ENCODE measurements at regions of chr1 and their contacts with region 1.

Region 1: GRCh38 chr1:24744911-24745710 is at the start of gene CLIC4:
- DNase-seq: peak; percentile 94
- ATAC-seq: peak; percentile 78
- H3K4me3 ChIP-seq: peak within 1 kb of the TSS; percentile 77
- H3K27ac ChIP-seq: peak within 1 kb of the TSS; percentile 76
- H3K4me1 ChIP-seq: peaks cover 34% of the 10 kb centered on the region
- H3K27me3 ChIP-seq: no peaks in the 10 kb centered on the region
- CTCF ChIP-seq: peak in 2 of 3 experiments; percentile 18 to 72; a peak in 3 of 6 replicates
- EP300 ChIP-seq: peak; percentile 34 to 64; a peak in 2 of 4 replicates
- POLR2A ChIP-seq: peak; percentile 91
- RAD21 ChIP-seq: no peak; the same call in 1 of the 2 replicates
- polyA plus RNA-seq, gene CLIC4: 20.4 to 26.5 TPM

Region 2: DNA sequence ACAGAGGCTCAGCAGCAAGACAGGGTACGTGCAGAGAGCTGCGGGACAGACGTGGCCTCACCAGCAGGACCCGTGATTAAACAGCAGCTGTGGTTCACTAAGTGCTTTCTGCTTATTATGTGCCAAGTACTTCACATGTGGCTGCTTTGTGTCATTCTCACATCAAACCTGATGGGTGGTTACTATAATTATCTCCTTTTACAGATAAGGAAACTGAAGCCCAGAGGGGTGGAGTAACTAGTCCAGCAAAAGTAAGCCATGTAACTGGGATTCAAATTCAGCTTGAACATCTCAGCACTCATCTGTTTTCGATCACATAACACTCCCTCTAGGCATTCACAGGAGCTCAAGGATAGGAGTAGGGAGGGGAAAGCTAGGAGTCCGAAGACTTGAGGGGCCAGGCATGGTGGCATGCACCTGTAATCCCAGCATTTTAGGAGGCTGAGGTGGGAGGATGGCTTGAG is 50.7 kb before region 1 on chr1:
- CTCF ChIA-PET with region 1: interaction called, 122 read pairs
- POLR2A ChIA-PET with region 1: interaction called, 29 read pairs
- RAD21 ChIA-PET with region 1: interaction called, 109 read pairs
- SMC1A ChIA-PET with region 1: interaction called, 93 read pairs
- in situ Hi-C with region 1: no loop called
- intact Hi-C with region 1: loop called (anchors 1 kb)
- DNase-seq: peak; percentile 79
- ATAC-seq: peak; percentile 94
- H3K4me3 ChIP-seq: no peak overlapping the region
- H3K27ac ChIP-seq: peak overlapping the region; percentile 43; the same call in 1 of the 2 replicates
- H3K4me1 ChIP-seq: peaks cover 27% of the 10 kb centered on the region
- H3K27me3 ChIP-seq: no peaks in the 10 kb centered on the region
- CTCF ChIP-seq: no peak
- EP300 ChIP-seq: peak; percentile 35 to 71; a peak in 3 of 4 replicates
- POLR2A ChIP-seq: peak; percentile 58
- RAD21 ChIP-seq: no peak

Region 3: GRCh38 chr1:24727501-24728216 is 17.5 kb before region 1 on chr1:
- CTCF ChIA-PET with region 1: interaction called, 19 read pairs
- POLR2A ChIA-PET with region 1: interaction called, 72 read pairs
- RAD21 ChIA-PET with region 1: interaction called, 77 read pairs
- SMC1A ChIA-PET with region 1: interaction called, 49 read pairs
- in situ Hi-C with region 1: no loop called
- intact Hi-C with region 1: no loop called
- DNase-seq: peak; percentile 71
- ATAC-seq: peak; percentile 98
- H3K4me3 ChIP-seq: peak overlapping the region; percentile 23; the same call in 1 of the 2 replicates
- H3K27ac ChIP-seq: peak overlapping the region; percentile 52
- H3K4me1 ChIP-seq: peaks cover 23% of the 10 kb centered on the region
- H3K27me3 ChIP-seq: no peaks in the 10 kb centered on the region
- CTCF ChIP-seq: no peak
- EP300 ChIP-seq: no peak
- POLR2A ChIP-seq: no peak
- RAD21 ChIP-seq: no peak

Region 4: GRCh38 chr1:24769656-24770651 is 24.8 kb after region 1 on chr1:
- CTCF ChIA-PET with region 1: interaction called, 30 read pairs
- POLR2A ChIA-PET with region 1: interaction called, 13 read pairs
- RAD21 ChIA-PET with region 1: interaction called, 56 read pairs
- SMC1A ChIA-PET with region 1: interaction called, 174 read pairs
- in situ Hi-C with region 1: no loop called
- intact Hi-C with region 1: no loop called
- DNase-seq: no peak
- ATAC-seq: peak; percentile 78
- H3K4me3 ChIP-seq: no peak overlapping the region
- H3K27ac ChIP-seq: peak overlapping the region; percentile 54
- H3K4me1 ChIP-seq: peaks cover 7% of the 10 kb centered on the region; the same call in 1 of the 2 replicates
- H3K27me3 ChIP-seq: no peaks in the 10 kb centered on the region
- CTCF ChIP-seq: no peak
- EP300 ChIP-seq: peak; percentile 49 to 57; a peak in 3 of 4 replicates
- POLR2A ChIP-seq: no peak
- RAD21 ChIP-seq: no peak

Region 5: DNA sequence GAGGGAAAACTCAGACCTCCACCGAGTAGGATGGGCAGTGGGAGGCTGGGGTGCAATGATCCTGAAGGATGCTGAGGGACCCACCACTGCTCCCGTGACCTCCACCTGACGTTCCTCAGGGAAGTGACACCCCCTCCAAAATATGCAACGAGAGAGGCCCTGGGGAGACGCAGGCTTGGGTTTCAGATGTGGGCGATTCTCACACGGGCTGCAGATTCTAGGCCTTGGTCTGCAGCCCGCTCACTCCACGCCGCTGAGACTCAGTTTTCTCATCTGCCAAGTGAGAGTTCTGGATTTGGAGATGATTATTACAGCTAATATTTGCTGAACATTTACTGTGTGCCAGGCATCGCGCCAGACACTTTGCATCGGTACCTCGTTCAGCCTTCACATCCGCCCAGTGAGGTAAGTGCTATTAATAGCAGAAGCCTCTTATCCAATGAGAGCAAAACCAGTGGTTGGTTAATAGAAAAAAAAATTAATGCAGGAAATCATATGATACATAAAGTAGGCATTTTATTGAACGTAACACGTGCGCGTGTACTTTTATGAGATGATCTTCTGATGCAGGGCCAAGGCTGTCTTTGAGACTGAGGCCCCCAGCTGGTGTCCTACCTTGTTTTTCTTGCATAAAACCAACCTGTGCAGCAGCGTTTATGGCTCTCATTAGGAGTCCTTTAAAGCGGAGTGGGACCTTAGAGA is 287.0 kb after region 1 on chr1:
- CTCF ChIA-PET with region 1: no interaction called
- POLR2A ChIA-PET with region 1: no interaction called
- RAD21 ChIA-PET with region 1: interaction called, 3 read pairs
- SMC1A ChIA-PET with region 1: interaction called, 3 read pairs
- in situ Hi-C with region 1: no loop called
- intact Hi-C with region 1: loop called (anchors 5 kb)
- DNase-seq: peak; percentile 94
- ATAC-seq: peak; percentile 44
- H3K4me3 ChIP-seq: peak overlapping the region; percentile 73
- H3K27ac ChIP-seq: peak overlapping the region; percentile 100
- H3K4me1 ChIP-seq: peaks cover 93% of the 10 kb centered on the region
- H3K27me3 ChIP-seq: no peaks in the 10 kb centered on the region
- CTCF ChIP-seq: peak in 1 of 3 experiments; percentile 30; a peak in 1 of 6 replicates
- EP300 ChIP-seq: peak in 1 of 2 experiments; percentile 17; a peak in 1 of 4 replicates
- POLR2A ChIP-seq: peak; percentile 66
- RAD21 ChIP-seq: peak; percentile 33; the same call in 1 of the 2 replicates